Adrenal gland (tissue), 19 donors: ENCODE measurements at regions of chr7 and their contacts with region 1.

Region 1: GRCh38 chr7:106112117-106112971 is at the start of gene SYPL1:
- DNase-seq: peak; percentile 94 to 96 (median 96)
- H3K4me3 ChIP-seq: peak within 1 kb of the TSS; percentile 42 to 92 (median 80)
- H3K27ac ChIP-seq: peak within 1 kb of the TSS; percentile 88 to 100 (median 98)
- H3K4me1 ChIP-seq: peaks cover 26 to 37% of the 10 kb centered on the region in 2 donors
- H3K27me3 ChIP-seq: no peaks in the 10 kb centered on the region
- CTCF ChIP-seq: peak in 1 of 6 experiments; percentile 14
- POLR2A ChIP-seq: peak; percentile 32 to 89
- total RNA-seq, gene SYPL1: 48.7 to 107 (median 89.6) TPM

Region 2: DNA sequence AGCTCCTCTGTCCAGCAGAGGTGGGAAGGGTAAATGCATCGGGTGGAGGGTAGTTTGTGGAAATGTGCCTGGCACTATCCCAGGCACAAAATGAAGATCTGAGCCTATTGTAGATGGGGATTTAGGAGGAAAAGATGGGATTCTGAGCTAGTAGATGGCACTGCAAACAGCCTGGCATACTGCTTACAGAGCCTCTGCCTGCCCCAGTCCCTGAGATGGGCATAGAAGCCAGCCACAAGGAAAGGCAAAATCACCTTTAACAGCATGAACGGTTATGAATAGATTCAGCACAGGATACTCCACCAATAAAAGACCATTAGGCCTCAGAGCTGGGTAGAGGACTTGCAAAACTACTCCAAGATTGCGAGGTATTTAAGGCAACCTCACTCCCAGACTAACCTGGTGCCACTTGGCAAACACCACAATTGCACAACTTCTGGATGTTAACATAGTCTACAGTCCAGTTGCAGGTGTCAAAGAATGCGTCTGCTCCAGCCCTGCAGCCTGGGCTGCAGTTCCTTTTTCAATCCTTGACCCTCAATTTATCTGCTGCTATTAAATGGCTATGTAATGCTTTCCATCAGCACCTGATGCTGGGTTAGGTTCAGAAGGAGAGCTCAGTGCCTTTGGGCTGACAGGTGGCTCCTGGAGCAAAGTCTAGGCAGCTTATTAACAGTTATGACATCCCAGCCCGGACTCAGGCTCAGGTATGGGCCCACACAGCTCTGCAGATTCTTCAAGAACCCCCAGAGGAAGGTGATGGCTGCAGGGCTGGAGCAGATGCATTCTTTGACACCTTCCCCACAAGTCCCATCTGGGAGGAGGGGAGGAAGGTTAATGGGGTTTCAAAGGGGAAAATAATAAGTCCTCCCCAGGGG is 115.2 kb before region 1 on chr7:
- intact Hi-C with region 1: no loop called
- DNase-seq: no peak
- H3K4me3 ChIP-seq: no peak overlapping the region
- H3K27ac ChIP-seq: no peak overlapping the region
- H3K4me1 ChIP-seq: no peaks in the 10 kb centered on the region
- H3K27me3 ChIP-seq: no peaks in the 10 kb centered on the region
- CTCF ChIP-seq: no peak
- POLR2A ChIP-seq: no peak

Region 3: DNA sequence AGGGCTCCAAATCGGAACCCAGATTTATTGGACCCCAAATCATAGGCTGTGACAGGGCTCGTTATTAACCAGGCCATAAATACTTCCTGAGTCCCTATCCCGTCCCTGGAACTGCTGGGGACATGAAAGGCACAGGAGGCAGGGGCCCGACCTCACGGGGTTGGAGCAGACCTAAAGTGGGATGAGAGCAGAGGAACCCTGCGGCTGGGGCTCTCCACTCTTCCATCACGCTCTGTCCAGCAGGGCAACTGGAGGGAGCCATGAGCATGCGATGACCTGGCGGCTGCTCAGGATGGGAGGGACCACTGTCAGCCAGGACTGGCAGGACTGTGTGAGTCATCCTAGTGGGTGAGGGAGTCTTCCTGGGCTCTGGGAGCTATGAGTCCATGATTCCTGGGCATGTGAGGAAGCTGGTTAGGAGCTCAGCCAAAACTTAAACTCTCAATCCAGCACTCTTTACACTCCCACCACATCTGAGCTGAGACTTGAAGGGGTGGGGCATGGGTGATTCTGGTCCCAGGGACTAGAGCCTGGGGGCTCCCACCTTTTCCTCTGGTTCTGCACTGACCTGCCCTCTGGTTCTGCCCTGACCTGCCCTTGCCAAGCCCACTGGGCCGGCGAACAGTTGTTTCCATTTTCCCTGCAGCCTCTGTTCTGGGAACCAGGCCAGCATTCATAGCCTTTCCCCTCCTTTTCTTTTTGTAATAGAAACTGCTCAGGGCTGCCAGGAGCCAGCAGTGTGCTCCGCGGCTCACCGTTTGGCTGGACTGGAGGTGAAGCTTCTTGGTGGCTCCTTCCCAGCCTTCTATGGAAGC is 47.4 kb before region 1 on chr7:
- intact Hi-C with region 1: loop called (anchors 5 kb)
- DNase-seq: peak; percentile 91 to 98 (median 97)
- H3K4me3 ChIP-seq: peak overlapping the region in 2 of 4 donors; percentile 9 to 43
- H3K27ac ChIP-seq: peak overlapping the region; percentile 82 to 93 (median 89)
- H3K4me1 ChIP-seq: peaks cover 20 to 22% of the 10 kb centered on the region in 2 donors
- H3K27me3 ChIP-seq: no peaks in the 10 kb centered on the region
- CTCF ChIP-seq: peak in 2 of 6 experiments; percentile 4 to 34
- POLR2A ChIP-seq: peak in 1 of 2 donors; percentile 72

Region 4: GRCh38 chr7:106071356-106071998 is 40.9 kb before region 1 on chr7:
- intact Hi-C with region 1: loop called (anchors 5 kb)
- DNase-seq: peak in 1 of 7 donors; percentile 14
- H3K4me3 ChIP-seq: no peak overlapping the region
- H3K27ac ChIP-seq: peak overlapping the region in 4 of 5 donors; percentile 14 to 82 (median 34)
- H3K4me1 ChIP-seq: peaks cover 20 to 24% of the 10 kb centered on the region in 2 donors
- H3K27me3 ChIP-seq: no peaks in the 10 kb centered on the region
- CTCF ChIP-seq: no peak
- POLR2A ChIP-seq: no peak